Transverse colon (tissue), 4 donors: ENCODE measurements at regions of chr12 and their contacts with region 1.

Region 1: GRCh38 chr12:48795480-48796455 is 6.9 kb upstream of the ADCY6 start:
- DNase-seq: peak; percentile 84
- H3K4me3 ChIP-seq: no peak overlapping the region
- H3K27ac ChIP-seq: peak overlapping the region; percentile 74 to 85 (median 78)
- H3K4me1 ChIP-seq: peaks cover 0 to 51% (median 18%) of the 10 kb centered on the region in 4 donors
- H3K27me3 ChIP-seq: peaks cover 8% of the 10 kb centered on the region
- CTCF ChIP-seq: peak; percentile 95 to 100 (median 98)
- EP300 ChIP-seq: no peak
- POLR2A ChIP-seq: peak; percentile 45

Region 2: GRCh38 chr12:48459259-48459658 is 336.5 kb before region 1 on chr12:
- in situ Hi-C with region 1: no loop called
- intact Hi-C with region 1: no loop called
- DNase-seq: no peak
- H3K4me3 ChIP-seq: no peak overlapping the region
- H3K27ac ChIP-seq: no peak overlapping the region
- H3K4me1 ChIP-seq: no peaks in the 10 kb centered on the region
- H3K27me3 ChIP-seq: no peaks in the 10 kb centered on the region
- CTCF ChIP-seq: no peak
- EP300 ChIP-seq: no peak
- POLR2A ChIP-seq: no peak

Region 3: DNA sequence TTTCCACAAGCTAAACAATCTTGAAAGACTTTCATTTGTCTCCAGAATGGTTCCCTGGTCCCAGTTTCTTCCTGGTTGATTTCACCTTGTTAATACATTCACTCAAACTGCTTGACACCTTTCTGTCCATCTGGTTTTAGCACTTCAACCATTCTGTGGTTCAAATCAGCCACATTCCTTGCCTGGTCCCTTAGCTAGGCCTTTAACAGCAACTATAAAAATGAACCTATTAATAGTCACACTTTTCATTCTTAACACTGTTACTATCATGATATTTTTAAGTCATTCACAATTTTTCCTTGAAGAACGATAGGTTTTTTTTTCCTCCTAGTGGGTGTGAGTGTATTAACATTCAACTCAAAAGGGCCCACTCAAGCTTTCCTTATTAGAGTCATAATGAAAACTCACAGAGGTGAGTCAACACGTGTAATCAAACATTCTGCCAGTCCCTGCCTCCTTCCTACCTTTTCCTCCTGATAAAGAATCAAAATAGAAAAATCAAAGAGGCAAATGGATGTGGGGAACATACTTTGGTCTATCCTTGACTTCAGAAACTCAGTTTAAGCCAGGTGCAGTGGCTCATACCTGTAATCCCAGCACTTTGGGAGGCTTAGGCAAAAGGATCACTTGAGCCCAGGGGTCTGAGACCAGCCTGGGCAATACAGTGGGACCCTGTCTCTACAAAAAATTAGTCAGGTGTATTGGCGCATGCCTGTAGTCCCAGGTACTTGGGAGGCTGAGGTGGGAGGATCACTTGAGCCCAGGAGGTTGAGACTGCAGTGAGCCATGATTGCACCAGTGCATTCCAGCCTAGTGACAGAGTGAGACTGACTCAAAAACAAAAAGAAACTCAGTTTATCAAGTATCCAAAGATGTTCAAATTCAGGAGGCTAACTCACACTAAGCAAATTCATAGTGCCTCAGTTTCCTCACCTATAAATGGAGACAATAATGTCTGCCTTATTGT is 44.7 kb before region 1 on chr12:
- in situ Hi-C with region 1: loop called in 1 of 4 experiments (anchors 5 kb)
- intact Hi-C with region 1: loop called (anchors 2 kb)
- DNase-seq: no peak
- H3K4me3 ChIP-seq: no peak overlapping the region
- H3K27ac ChIP-seq: no peak overlapping the region
- H3K4me1 ChIP-seq: peaks cover 0 to 5% (median 0%) of the 10 kb centered on the region in 4 donors
- H3K27me3 ChIP-seq: no peaks in the 10 kb centered on the region
- CTCF ChIP-seq: no peak
- EP300 ChIP-seq: no peak
- POLR2A ChIP-seq: no peak

Region 4: GRCh38 chr12:48758221-48758620 is 37.5 kb before region 1 on chr12:
- in situ Hi-C with region 1: loop called in 2 of 4 experiments (anchors 5 kb)
- intact Hi-C with region 1: loop called (anchors 2 kb)
- DNase-seq: no peak
- H3K4me3 ChIP-seq: no peak overlapping the region
- H3K27ac ChIP-seq: no peak overlapping the region
- H3K4me1 ChIP-seq: peaks cover 0 to 5% (median 0%) of the 10 kb centered on the region in 4 donors
- H3K27me3 ChIP-seq: no peaks in the 10 kb centered on the region
- CTCF ChIP-seq: no peak
- EP300 ChIP-seq: no peak
- POLR2A ChIP-seq: no peak

Region 5: DNA sequence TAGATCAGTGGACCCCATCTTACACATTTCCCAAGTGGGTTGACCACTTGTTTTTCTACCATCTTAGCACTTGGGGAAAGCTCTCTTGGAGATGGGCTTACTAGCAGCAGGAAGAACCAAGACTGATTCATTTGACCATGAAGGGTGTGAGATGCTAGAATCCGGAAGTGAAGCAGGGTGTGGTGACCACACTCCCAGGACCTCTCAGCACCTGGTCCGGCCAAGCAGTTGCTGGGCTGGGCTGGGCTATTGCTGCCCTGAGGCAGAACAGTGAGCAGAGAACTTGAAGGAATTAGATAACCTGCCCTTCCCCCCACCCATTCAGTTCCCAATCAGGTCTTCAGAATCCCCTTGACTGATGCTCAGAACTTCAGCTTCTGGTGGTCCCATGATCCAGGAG is 31.2 kb before region 1 on chr12:
- in situ Hi-C with region 1: loop called in 1 of 4 experiments (anchors 5 kb)
- intact Hi-C with region 1: no loop called
- DNase-seq: peak; percentile 65
- H3K4me3 ChIP-seq: no peak overlapping the region
- H3K27ac ChIP-seq: peak overlapping the region in 2 of 4 donors; percentile 17 to 42
- H3K4me1 ChIP-seq: peaks cover 0 to 18% (median 11%) of the 10 kb centered on the region in 4 donors
- H3K27me3 ChIP-seq: no peaks in the 10 kb centered on the region
- CTCF ChIP-seq: no peak
- EP300 ChIP-seq: no peak
- POLR2A ChIP-seq: no peak